ENCODE measurements at regions of chr1 and their contacts with region 1.

Region 1: DNA sequence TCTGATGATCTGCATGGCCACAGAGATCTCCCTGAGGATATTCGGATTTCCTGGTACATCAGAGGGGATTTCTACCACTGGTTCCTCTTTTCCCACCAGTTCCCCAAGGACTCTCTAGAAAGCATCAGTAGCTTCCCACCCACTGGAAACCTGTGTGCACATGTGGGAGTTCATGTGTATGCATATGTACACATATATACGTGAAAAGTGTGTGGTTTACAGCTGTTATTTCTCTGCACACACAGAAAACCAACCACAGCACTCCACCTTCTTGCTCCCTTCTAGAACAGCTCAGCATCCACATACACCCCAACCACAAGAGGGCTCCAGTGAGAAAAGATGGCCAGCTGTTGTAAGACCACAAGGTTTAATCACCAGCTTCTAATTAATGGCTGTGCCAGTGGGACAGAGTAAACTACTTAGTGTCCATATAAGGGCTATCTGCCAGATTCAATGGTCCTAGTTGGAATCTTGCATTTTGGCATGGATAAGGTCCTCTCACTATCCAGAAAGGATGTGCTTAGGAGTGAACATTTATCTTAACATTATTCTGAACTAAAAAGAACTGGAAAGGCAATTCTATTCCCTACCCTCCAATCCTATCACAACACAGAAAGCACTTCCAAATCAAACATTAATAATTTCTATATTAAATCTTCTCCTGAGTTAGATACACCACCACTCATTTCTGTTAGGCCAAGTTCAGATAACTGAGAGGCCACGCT is 24.1 kb downstream of the GPR3 start:
- DNase-seq: peak; percentile 80
- H3K4me3 ChIP-seq: no peak overlapping the region
- H3K27ac ChIP-seq: no peak overlapping the region
- H3K4me1 ChIP-seq: peaks cover 5% of the 10 kb centered on the region
- H3K27me3 ChIP-seq: no peaks in the 10 kb centered on the region
- CTCF ChIP-seq: peak; percentile 75 to 76
- POLR2A ChIP-seq: no peak

Region 2: GRCh38 chr1:26761217-26761616 is 655.3 kb before region 1 on chr1:
- CTCF ChIA-PET with region 1: no interaction called
- POLR2A ChIA-PET with region 1: no interaction called
- dilution Hi-C with region 1: no loop called
- intact Hi-C with region 1: no loop called
- DNase-seq: no peak
- H3K4me3 ChIP-seq: no peak overlapping the region
- H3K27ac ChIP-seq: no peak overlapping the region
- H3K4me1 ChIP-seq: no peaks in the 10 kb centered on the region
- H3K27me3 ChIP-seq: no peaks in the 10 kb centered on the region
- CTCF ChIP-seq: peak; percentile 15 to 32
- POLR2A ChIP-seq: no peak

Region 3: GRCh38 chr1:27438621-27439061 is 22.1 kb after region 1 on chr1:
- CTCF ChIA-PET with region 1: interaction called, 10 read pairs
- POLR2A ChIA-PET with region 1: no interaction called
- dilution Hi-C with region 1: no loop called
- intact Hi-C with region 1: no loop called
- DNase-seq: no peak
- H3K4me3 ChIP-seq: no peak overlapping the region
- H3K27ac ChIP-seq: no peak overlapping the region
- H3K4me1 ChIP-seq: peaks cover 21% of the 10 kb centered on the region
- H3K27me3 ChIP-seq: no peaks in the 10 kb centered on the region
- CTCF ChIP-seq: no peak
- POLR2A ChIP-seq: no peak

Region 4: DNA sequence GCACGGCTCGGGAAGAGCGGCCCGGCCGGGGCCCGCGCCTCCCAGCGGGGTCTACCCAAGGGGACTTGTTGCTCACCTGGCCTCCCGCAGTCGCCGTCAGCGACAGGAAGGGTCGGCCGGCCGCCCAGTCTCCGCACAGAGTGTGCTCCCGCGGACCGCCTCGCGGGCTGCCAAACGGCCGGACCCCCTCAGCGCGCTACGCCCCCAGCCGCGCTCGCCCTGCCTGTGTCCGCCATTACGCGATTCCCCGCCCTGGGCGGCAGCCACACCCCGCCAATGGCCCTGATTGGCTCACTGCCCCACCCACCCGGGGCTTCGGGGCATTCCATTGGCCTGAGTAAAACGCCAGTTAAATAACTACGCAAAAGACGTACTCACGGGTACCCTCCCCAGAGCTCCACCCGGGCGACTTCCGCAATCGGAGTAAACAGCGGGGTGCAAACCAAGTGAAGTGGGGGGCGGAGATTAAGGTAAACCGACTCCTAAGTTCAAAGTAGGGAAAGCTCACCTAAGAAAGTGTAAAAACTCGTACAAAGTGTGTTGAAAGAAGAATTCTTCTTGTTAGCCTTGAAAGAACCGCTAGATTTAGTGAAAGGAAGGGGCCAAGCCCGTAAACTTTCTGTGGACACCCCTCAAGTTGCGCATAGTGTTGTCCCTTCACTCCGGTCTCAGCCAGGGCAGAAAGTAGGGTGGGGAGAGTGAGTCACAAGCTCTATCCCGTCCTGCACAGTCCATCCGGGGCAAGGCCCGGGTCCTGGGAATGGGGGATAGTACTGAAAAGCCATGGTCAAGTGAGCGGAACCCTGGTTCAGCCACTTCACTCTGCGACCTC is 73.6 kb after region 1 on chr1 and contains the start of gene WASF2:
- CTCF ChIA-PET with region 1: interaction called, 31 read pairs
- POLR2A ChIA-PET with region 1: interaction called, 4 read pairs
- dilution Hi-C with region 1: no loop called
- intact Hi-C with region 1: loop called (anchors 1 kb)
- DNase-seq: peak; percentile 98
- H3K4me3 ChIP-seq: peak within 1 kb of the TSS; percentile 42 to 83 (median 80)
- H3K27ac ChIP-seq: peak within 1 kb of the TSS; percentile 95
- H3K4me1 ChIP-seq: peaks cover 14% of the 10 kb centered on the region
- H3K27me3 ChIP-seq: no peaks in the 10 kb centered on the region
- CTCF ChIP-seq: no peak
- POLR2A ChIP-seq: peak; percentile 74
- total RNA-seq, gene WASF2: 169 and 172 TPM in 2 replicates

Region 5: GRCh38 chr1:27574871-27575831 is 158.6 kb after region 1 on chr1:
- CTCF ChIA-PET with region 1: interaction called, 3 read pairs
- POLR2A ChIA-PET with region 1: no interaction called
- dilution Hi-C with region 1: loop called (anchors 25 kb)
- intact Hi-C with region 1: no loop called
- DNase-seq: peak; percentile 74
- H3K4me3 ChIP-seq: peak overlapping the region in 1 of 3 experiments; percentile 7
- H3K27ac ChIP-seq: peak overlapping the region; percentile 66
- H3K4me1 ChIP-seq: peaks cover 27% of the 10 kb centered on the region
- H3K27me3 ChIP-seq: no peaks in the 10 kb centered on the region
- CTCF ChIP-seq: peak; percentile 54 to 62
- POLR2A ChIP-seq: no peak